ENCODE measurements at regions of chr1 and their contacts with region 1.

Region 1: DNA sequence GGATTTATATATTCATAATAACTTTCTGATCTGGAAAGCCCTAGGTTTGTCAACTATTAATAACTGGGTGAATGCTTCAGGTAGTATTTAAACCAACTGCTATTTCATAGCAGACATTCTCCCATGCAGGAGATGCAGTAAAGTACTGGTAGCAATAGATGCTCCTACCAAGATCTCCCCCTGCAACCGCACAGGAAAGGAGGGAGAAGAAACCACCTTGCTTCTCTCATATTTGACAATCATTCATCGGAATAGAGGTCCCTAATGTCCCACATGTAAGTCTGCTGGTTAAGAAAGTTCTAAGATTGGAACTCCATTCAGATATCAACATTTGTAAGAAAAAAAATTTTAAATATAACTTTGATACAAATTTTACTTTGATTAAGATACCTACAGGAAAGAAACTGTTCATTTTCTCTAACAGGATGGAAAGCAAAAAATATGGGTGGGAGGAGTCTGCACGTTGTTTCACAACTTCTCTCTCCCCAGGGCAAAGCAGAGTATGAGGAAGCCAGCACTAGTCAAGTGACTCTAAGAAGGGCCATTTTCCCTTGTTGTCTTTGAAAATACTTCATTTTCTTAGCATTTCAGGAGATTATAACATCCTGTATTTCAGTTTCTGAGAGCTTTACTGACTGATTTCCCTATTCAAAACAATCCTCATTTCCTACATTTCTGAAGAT is at the start of gene PYHIN1:
- DNase-seq: no peak
- ATAC-seq: peak; percentile 53; the same call in 2 of the 3 replicates
- H3K4me3 ChIP-seq: no peak within 1 kb of the TSS
- H3K27ac ChIP-seq: no peak within 1 kb of the TSS
- H3K4me1 ChIP-seq: no peaks in the 10 kb centered on the region
- H3K27me3 ChIP-seq: no peaks in the 10 kb centered on the region
- CTCF ChIP-seq: no peak
- EP300 ChIP-seq: no peak
- POLR2A ChIP-seq: no peak
- RAD21 ChIP-seq: no peak
- polyA plus RNA-seq, gene PYHIN1: 0.35 to 0.56 TPM

Region 2: DNA sequence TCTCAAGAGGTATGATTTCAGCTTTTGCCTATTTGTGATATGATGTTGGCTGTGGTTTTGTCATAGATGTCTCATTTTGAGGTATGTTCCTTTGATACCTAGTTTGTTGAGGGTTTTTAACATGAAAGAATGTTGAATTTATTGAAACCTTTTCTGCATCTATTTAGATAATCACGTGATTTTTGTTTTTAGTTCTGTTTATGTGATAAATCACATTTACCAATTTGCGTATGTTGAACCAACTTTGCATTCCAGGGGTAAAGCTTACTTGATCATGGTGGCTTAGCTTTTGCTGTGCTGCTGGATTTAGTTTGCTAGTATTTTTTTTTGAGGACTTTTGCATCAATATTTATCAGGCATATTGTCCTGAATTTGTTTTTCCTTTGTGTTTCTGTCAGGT is 52.0 kb after region 1 on chr1:
- CTCF ChIA-PET with region 1: no interaction called
- POLR2A ChIA-PET with region 1: no interaction called
- RAD21 ChIA-PET with region 1: no interaction called
- SMC1A ChIA-PET with region 1: no interaction called
- in situ Hi-C with region 1: loop called (anchors 5 kb)
- intact Hi-C with region 1: no loop called
- DNase-seq: no peak
- ATAC-seq: no peak
- H3K4me3 ChIP-seq: no peak overlapping the region
- H3K27ac ChIP-seq: no peak overlapping the region
- H3K4me1 ChIP-seq: no peaks in the 10 kb centered on the region
- H3K27me3 ChIP-seq: no peaks in the 10 kb centered on the region
- CTCF ChIP-seq: no peak
- EP300 ChIP-seq: no peak
- POLR2A ChIP-seq: no peak
- RAD21 ChIP-seq: no peak